Left ventricle myocardium inferior (tissue), 1 donor: ENCODE measurements at regions of chr3 and their contacts with region 1.

Region 1: GRCh38 chr3:170317954-170318353 is 39.6 kb upstream of the SKIL start:
- DNase-seq: no peak
- H3K4me3 ChIP-seq: no peak overlapping the region
- H3K27ac ChIP-seq: no peak overlapping the region
- H3K4me1 ChIP-seq: peaks cover 13% of the 10 kb centered on the region
- H3K27me3 ChIP-seq: no peaks in the 10 kb centered on the region
- CTCF ChIP-seq: no peak

Region 2: DNA sequence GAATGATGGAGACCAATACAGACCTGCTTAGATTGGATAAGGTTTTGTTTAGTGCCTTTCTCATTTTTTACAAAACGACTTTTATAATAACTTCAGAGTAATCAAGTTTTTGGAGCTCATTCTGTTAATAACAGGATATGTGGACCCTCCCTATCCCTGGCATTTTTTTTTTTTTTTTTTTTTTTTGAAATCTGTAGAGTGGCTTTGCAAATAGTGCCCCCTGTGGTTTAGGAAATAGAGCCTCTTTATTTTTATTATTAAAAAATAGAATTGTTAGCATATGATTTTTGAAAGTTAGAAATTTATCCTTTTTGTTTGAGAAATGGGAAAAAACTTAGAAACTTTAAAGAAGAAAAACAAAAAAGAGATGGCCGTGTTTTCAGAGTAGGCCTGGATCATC is 51.0 kb after region 1 on chr3:
- intact Hi-C with region 1: loop called (anchors 10 kb)
- DNase-seq: no peak
- H3K4me3 ChIP-seq: no peak overlapping the region
- H3K27ac ChIP-seq: no peak overlapping the region
- H3K4me1 ChIP-seq: peaks cover 69% of the 10 kb centered on the region
- H3K27me3 ChIP-seq: no peaks in the 10 kb centered on the region
- CTCF ChIP-seq: peak; percentile 48

Region 3: DNA sequence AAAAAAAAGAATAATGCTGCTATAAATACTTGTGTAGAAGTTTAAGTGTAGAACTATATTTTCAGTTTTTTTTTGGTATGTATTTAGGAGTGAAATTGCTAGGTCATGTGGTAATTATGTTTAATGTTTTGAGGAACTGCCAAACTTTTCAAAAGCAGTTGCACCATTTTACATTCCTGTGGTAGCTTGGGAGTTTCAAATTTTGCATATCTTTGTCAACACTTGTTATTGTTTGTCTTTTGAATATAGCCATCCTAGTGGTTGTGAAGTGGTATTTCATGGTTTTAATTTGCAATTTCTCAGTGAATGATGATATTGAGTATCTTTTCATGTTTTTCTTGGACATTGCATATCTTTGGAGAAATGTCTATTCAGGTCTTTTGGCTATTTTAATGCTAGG is 70.0 kb after region 1 on chr3:
- intact Hi-C with region 1: no loop called
- DNase-seq: no peak
- H3K4me3 ChIP-seq: no peak overlapping the region
- H3K27ac ChIP-seq: no peak overlapping the region
- H3K4me1 ChIP-seq: no peaks in the 10 kb centered on the region
- H3K27me3 ChIP-seq: no peaks in the 10 kb centered on the region
- CTCF ChIP-seq: no peak